Breast epithelium (tissue), 4 donors: ENCODE measurements at regions of chr13 and their contacts with region 1.

Region 1: GRCh38 chr13:105112561-105112960 is 1422.9 kb downstream of the EFNB2 start:
- DNase-seq: no peak
- H3K4me3 ChIP-seq: no peak overlapping the region
- H3K27ac ChIP-seq: no peak overlapping the region
- H3K4me1 ChIP-seq: no peaks in the 10 kb centered on the region
- H3K27me3 ChIP-seq: no peaks in the 10 kb centered on the region
- CTCF ChIP-seq: no peak
- POLR2A ChIP-seq: no peak

Region 2: GRCh38 chr13:104567114-104567513 is 545.4 kb before region 1 on chr13:
- intact Hi-C with region 1: loop called (anchors 5 kb)
- DNase-seq: no peak
- H3K4me3 ChIP-seq: no peak overlapping the region
- H3K27ac ChIP-seq: no peak overlapping the region
- H3K4me1 ChIP-seq: no peaks in the 10 kb centered on the region
- H3K27me3 ChIP-seq: no peaks in the 10 kb centered on the region
- CTCF ChIP-seq: no peak
- POLR2A ChIP-seq: no peak

Region 3: DNA sequence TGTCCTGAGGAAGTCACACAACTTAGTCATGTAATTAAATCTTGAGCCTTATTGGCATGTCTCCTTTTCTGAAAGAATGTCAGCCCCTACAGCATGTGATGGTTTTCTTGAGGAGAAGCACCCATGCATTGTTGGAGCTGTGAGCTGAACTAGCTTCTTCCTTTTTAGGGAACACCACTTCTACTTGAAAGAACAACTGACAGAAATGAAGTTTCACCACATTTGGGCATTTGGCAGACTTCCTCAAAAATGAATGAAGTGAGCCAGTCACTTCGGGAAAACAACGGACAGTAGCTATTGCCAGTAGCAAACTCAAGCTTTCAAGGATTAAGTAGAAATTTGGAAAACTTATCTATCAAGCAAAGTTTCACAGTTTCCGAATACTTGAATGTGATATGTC is 71.6 kb after region 1 on chr13:
- intact Hi-C with region 1: no loop called
- DNase-seq: no peak
- H3K4me3 ChIP-seq: no peak overlapping the region
- H3K27ac ChIP-seq: no peak overlapping the region
- H3K4me1 ChIP-seq: no peaks in the 10 kb centered on the region
- H3K27me3 ChIP-seq: no peaks in the 10 kb centered on the region
- CTCF ChIP-seq: no peak
- POLR2A ChIP-seq: no peak